ENCODE measurements at regions of chr13 and their contacts with region 1.

Region 1: DNA sequence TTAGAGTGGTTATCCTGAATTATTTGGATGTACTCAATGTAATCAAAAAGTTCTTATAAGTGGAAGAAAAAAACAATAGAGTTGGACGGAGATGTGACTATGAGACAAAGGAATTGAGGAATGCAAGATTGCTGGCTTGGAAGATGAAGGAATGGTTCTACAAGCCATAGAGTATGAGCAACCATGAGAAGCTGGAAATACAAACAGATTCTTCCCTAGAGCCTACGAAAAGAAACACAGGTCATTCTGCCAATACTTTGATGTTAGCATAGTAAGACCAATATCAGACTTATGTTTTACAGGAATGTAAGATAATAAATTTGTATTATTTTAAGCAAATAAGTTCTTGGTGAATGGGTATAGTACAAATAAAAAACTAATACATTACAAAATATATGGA is 249.2 kb downstream of the DIAPH3 start:
- DNase-seq: no peak
- ATAC-seq: peak; percentile 64
- H3K4me3 ChIP-seq: no peak overlapping the region
- H3K27ac ChIP-seq: no peak overlapping the region
- H3K4me1 ChIP-seq: no peaks in the 10 kb centered on the region
- H3K27me3 ChIP-seq: no peaks in the 10 kb centered on the region
- CTCF ChIP-seq: no peak

Region 2: DNA sequence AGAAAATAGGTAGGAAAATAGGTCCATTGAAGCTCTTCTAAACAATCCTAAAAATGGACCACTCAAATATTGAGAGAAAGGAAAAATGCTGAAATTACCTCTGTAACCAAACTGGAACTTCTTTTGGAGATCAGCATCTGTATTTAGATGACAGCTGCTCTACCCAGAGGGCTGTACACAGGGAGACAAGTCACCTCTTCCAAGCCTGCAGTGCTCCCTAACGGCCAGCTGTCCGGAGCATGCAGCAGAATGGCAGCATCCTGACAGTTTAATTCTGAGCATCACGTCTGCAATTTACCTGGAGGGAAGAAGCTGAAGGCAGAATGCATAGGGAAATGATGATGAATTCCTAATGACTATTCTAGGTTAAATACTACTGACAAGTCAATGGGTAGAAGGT is 312.0 kb after region 1 on chr13:
- CTCF ChIA-PET with region 1: no interaction called
- POLR2A ChIA-PET with region 1: no interaction called
- intact Hi-C with region 1: loop called (anchors 10 kb)
- DNase-seq: peak; percentile 30
- ATAC-seq: peak; percentile 84
- H3K4me3 ChIP-seq: no peak overlapping the region
- H3K27ac ChIP-seq: no peak overlapping the region
- H3K4me1 ChIP-seq: no peaks in the 10 kb centered on the region
- H3K27me3 ChIP-seq: peaks cover 20% of the 10 kb centered on the region; the same call in 1 of the 2 replicates
- CTCF ChIP-seq: peak; percentile 53